ENCODE measurements at regions of chr6 and their contacts with region 1.

Region 1: DNA sequence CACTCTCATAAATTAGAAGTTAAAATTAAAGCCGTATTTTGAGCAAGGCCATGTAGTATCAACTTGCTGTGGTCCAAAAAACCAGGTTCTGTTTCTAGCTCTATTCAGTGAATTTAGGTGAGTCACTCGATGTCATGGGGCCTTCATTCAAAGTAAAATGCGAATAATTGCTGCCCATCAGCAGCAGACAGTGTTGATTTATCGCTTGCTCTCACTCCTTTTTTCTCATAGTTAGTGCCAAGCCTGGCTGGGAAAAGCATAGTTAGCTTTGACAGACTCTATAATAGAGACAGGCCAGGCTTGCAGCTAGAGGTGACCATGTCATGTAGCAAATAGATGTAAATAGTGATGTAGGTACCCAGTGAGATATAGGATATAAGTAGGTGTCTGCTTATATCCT is 136.0 kb downstream of the EDN1 start:
- DNase-seq: no peak
- ATAC-seq: no peak
- H3K4me3 ChIP-seq: no peak overlapping the region
- H3K27ac ChIP-seq: peak overlapping the region; percentile 42 to 70
- H3K4me1 ChIP-seq: peaks cover 8 to 10% of the 10 kb centered on the region in 2 donors
- H3K27me3 ChIP-seq: no peaks in the 10 kb centered on the region

Region 2: DNA sequence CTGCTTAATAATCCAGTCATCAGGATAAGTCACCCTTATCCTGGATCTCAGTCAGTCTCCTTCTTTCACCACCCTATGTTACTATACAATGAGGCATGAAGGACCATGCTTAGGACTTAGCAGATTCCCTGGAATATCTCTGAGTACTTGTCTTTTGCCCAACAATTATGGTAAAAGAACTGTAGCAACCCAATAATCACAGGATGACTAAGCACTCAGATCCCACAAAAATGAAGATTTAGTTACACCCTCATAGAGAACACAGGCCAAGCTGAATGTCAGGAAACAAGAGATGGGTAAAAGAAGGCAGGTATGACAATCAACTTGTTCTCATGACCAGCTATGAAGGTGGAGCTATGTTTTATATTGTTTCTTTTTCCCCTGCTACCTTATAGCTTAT is 44.5 kb before region 1 on chr6:
- intact Hi-C with region 1: no loop called
- DNase-seq: no peak
- ATAC-seq: no peak
- H3K4me3 ChIP-seq: no peak overlapping the region
- H3K27ac ChIP-seq: no peak overlapping the region
- H3K4me1 ChIP-seq: peaks cover 8 to 11% of the 10 kb centered on the region in 2 donors
- H3K27me3 ChIP-seq: no peaks in the 10 kb centered on the region

Region 3: DNA sequence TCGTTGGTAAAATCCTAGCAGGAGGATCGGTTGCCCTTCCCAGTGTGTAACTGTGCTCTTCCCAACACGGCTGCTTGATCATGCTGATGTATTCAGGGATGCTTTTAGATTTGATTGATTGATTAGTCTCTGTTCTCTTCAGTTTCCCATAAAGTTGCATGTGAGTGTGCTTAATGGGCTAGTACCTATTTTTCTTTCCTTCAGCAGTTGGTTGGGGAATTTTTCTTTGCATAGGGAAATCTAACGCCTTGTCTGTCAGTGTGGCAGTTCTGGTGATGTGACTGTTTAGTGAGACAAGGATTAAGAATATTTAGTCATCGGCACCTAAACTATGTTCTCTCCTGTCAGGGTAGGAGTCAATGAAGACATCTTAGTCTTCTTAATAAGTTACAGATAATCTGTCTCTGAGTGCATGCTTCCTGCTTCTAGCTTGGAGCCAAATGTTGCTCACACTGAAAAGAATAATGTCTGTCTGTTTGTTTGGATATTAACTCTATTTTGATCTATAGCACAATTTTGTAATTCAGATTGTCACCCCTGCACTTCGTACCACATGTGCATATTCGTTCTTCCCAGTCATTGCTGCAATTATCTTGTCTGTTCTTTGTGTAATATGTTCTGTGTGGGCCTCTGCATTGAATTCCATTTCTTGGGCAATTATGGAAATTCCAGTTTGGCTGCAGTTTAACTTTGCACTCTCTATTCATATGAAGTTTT is 34.0 kb after region 1 on chr6:
- intact Hi-C with region 1: loop called in 1 of 2 experiments (anchors 5 kb)
- DNase-seq: no peak
- ATAC-seq: no peak
- H3K4me3 ChIP-seq: no peak overlapping the region
- H3K27ac ChIP-seq: no peak overlapping the region
- H3K4me1 ChIP-seq: no peaks in the 10 kb centered on the region
- H3K27me3 ChIP-seq: no peaks in the 10 kb centered on the region

Region 4: GRCh38 chr6:12472601-12473038 is 46.5 kb after region 1 on chr6:
- intact Hi-C with region 1: loop called in 1 of 2 experiments (anchors 5 kb)
- DNase-seq: peak; percentile 81 to 87
- ATAC-seq: peak; percentile 92
- H3K4me3 ChIP-seq: no peak overlapping the region
- H3K27ac ChIP-seq: peak overlapping the region; percentile 4 to 99
- H3K4me1 ChIP-seq: peaks cover 9 to 11% of the 10 kb centered on the region in 2 donors
- H3K27me3 ChIP-seq: no peaks in the 10 kb centered on the region

Measured in aorta (tissue), 5 donors.